Activated naive CD4-positive, alpha-beta T cell treated with anti-CD3 and anti-CD28 coated beads for 36 hours (primary cell): ENCODE measurements at regions of chr10 and their contacts with region 1.

Region 1: GRCh38 chr10:45672181-45673073 is at the start of gene ZFAND4:
- DNase-seq: peak; percentile 95
- H3K4me3 Mint-ChIP-seq: peak within 1 kb of the TSS; percentile 83
- H3K27ac Mint-ChIP-seq: peak within 1 kb of the TSS; percentile 73
- H3K4me1 Mint-ChIP-seq: peaks cover 31% of the 10 kb centered on the region
- H3K27me3 Mint-ChIP-seq: no peaks in the 10 kb centered on the region
- total RNA-seq, gene ZFAND4: 13.3 to 14.7 TPM

Region 2: GRCh38 chr10:44143556-44143955 is 1528.9 kb before region 1 on chr10:
- CTCF ChIA-PET with region 1: no interaction called
- intact Hi-C with region 1: no loop called
- DNase-seq: no peak
- H3K4me3 Mint-ChIP-seq: no peak overlapping the region
- H3K27ac Mint-ChIP-seq: no peak overlapping the region
- H3K4me1 Mint-ChIP-seq: no peaks in the 10 kb centered on the region
- H3K27me3 Mint-ChIP-seq: peaks cover 2% of the 10 kb centered on the region

Region 3: DNA sequence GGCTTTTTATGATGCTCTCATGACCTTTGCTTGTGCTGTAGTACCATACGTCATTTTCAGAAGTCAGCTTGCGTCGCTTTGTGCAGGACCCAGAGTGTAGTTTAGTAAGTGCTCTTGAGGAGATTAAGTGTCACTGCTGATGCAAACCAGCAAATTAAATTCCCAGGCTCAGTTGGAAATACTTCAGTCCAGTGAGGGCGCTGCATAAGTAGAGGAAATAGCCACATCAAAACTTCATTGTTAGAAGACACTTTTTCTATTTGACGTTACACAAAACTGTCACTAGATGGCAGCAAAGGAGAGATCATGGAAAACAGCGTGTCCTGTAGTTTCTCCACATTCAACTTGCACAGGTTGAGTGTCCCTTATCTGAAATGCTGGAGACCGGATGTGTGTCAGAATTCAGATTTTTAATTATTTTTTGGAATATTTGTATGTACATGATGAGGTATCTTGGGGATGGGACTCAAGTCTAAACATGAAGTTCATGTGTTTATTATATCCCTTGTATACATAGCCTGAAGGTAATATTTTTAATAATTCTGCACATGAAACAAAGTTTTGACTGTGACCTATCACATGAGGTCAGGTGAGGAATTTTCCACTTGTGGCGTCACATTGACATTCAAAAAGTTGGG is 663.8 kb before region 1 on chr10:
- CTCF ChIA-PET with region 1: no interaction called
- intact Hi-C with region 1: loop called (anchors 2 kb)
- DNase-seq: peak; percentile 33
- H3K4me3 Mint-ChIP-seq: no peak overlapping the region
- H3K27ac Mint-ChIP-seq: no peak overlapping the region
- H3K4me1 Mint-ChIP-seq: no peaks in the 10 kb centered on the region
- H3K27me3 Mint-ChIP-seq: no peaks in the 10 kb centered on the region

Region 4: DNA sequence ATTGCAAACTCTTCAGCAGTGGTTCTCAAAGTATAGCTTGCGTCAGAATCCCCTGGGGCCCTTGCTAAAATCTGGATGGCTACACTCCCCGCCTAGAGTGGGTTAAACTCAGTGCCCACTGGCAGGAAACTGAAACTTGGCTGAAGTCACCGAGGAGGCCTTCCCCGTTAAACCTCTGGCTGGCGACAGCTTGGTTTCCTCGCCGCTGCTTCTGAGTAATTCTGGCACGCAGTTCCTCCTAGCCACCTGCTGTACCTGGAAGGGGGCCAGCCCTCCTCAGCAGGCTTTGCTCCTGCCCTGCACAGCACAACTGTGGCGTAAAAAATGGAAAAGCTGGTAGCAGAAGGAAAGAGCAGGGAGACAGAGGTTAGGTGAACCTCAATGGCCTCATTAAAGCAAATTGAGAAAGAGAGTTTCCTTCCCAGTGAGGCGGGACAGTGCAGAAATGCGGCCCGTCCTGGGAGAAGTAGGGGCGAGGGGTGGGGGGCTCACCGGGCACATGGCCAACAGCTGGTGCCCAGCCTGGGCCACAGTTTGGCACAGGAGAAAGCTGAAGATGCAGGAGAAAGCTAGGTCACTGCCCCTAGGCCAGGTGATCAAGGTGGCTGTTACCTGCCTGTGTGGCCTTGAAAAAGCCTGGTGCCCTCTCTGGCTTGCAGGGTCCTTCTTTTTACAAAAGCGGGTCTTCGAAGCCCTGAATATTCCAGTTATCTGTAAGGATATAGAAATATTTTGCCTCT is 251.8 kb before region 1 on chr10:
- CTCF ChIA-PET with region 1: no interaction called
- intact Hi-C with region 1: loop called (anchors 5 kb)
- DNase-seq: peak; percentile 68
- H3K4me3 Mint-ChIP-seq: peak overlapping the region; percentile 86
- H3K27ac Mint-ChIP-seq: peak overlapping the region; percentile 4
- H3K4me1 Mint-ChIP-seq: peaks cover 36% of the 10 kb centered on the region
- H3K27me3 Mint-ChIP-seq: no peaks in the 10 kb centered on the region

Region 5: GRCh38 chr10:45456822-45457221 is 215.6 kb before region 1 on chr10:
- CTCF ChIA-PET with region 1: no interaction called
- intact Hi-C with region 1: no loop called
- DNase-seq: no peak
- H3K4me3 Mint-ChIP-seq: no peak overlapping the region
- H3K27ac Mint-ChIP-seq: no peak overlapping the region
- H3K4me1 Mint-ChIP-seq: no peaks in the 10 kb centered on the region
- H3K27me3 Mint-ChIP-seq: no peaks in the 10 kb centered on the region

Region 6: DNA sequence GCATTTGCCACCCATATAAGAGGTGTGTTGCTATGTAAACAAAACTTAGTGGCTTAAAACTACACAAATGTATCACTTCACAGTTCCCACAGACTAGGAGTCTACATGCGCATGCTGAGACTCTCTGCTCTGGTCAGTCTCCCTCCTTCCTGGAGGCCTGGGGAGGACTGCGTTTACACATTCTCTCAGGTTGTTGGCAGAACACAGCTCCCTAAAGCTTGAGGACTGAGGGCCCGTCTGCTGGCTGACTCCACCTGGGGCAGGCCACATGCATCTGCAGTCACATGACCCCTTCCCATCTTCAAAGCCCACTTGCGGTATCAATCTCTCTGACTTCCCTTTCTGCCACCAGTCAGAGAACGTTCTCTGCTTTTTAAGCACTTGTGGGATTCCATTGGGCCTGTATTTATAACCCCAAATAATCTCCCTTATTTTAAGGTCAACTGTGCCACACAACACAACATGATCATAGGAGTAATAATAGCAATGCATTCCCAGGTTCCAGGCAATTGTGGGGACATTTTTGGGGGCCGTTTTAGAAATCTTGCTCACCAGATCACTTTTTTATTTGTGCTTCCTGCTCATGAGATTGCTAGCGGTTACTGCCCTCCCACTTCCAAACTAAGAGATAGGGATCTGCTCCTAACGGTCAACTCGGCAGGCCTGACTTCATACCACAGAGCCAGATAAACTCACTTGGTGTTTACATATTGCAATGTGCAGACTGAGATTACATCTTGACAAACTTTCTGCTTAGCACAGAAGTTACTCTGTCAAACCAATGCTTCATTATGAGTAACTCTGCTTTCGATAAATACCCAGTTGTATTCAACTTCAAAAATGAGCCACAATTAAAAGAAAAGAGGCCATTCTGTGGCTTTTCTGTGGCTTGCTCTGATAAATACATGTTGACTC is 202.1 kb before region 1 on chr10:
- CTCF ChIA-PET with region 1: interaction called, 31 read pairs
- intact Hi-C with region 1: loop called (anchors 1 kb)
- DNase-seq: peak; percentile 77
- H3K4me3 Mint-ChIP-seq: peak overlapping the region; percentile 48
- H3K27ac Mint-ChIP-seq: peak overlapping the region; percentile 87
- H3K4me1 Mint-ChIP-seq: peaks cover 27% of the 10 kb centered on the region
- H3K27me3 Mint-ChIP-seq: no peaks in the 10 kb centered on the region

Region 7: DNA sequence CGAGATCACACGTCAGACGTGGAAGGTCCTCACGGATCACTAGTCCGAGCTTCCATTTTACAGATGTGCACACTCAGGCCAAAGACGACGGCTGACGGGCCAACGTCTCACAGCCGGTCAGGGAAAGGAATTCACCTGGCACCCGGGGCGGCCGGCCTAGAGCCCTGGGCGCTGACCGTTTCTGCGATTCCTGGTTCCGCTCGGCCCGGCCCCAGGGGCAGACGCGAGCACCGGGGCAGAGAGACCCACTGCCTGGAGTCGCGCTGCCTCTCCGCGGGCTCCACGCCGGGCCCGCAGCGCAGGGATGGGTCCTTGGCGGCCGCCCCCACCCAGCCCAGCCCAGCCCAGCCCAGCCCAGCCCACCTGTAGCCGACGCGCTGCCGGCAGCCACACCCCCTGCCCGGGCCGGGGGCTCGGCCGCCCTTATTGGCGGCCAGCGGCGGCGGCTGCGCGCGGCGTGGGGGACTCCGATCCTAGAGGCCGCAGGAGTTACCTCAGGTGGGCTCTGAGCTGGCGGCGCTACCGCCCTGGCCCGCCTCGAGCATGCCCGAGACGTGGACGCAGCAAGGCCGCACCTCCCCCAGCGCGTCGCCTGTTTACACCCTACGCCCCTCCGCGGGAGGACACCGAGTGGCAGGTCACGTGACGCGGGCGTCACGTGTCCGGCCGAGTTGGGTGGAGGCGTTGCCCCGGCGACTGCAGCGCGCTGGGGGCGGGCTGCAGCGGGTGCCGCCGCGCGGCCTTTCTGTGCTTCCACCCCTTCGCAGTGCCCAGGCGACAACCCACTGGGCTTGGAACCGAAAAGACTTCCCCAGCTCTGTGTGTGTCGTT is 77.9 kb before region 1 on chr10:
- CTCF ChIA-PET with region 1: no interaction called
- intact Hi-C with region 1: loop called (anchors 1 kb)
- DNase-seq: peak; percentile 87
- H3K4me3 Mint-ChIP-seq: peak overlapping the region; percentile 77
- H3K27ac Mint-ChIP-seq: peak overlapping the region; percentile 37
- H3K4me1 Mint-ChIP-seq: peaks cover 29% of the 10 kb centered on the region
- H3K27me3 Mint-ChIP-seq: no peaks in the 10 kb centered on the region

Region 8: DNA sequence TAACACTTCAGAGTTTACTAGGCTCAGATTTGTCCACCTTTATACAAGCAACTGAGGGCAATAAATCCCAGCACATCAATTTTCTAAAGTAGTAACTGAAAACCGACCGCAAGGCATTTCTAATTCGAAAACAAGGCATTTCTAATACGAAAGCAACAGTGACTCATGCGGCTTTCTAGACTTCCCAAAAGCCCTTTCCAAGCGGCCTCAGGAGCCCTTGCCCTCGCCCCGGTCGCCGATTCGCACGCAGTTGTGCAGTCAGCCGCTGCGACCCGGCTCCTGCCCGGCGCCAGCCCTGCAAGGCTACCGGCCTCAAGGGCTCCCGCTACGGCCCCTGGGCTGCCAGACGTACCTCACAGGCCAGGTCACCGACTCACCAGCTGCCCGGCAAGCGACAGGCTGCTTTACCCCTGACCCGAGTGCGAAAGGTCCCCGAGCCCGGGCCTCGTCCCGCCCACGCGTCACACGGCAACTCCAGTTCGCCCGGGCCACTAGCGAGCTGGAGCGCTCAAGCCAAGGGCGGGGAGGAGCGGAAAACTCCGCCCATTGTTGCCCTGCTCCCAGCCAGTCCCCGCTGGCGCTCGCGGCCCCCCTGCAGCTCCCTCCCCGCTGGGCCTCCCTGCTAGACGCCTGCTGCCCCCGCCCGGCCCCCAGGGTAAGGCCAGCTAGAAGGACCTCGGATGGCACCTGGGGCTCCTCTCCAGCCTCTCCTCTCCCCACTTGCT is 350.7 kb after region 1 on chr10:
- CTCF ChIA-PET with region 1: interaction called, 3 read pairs
- intact Hi-C with region 1: loop called (anchors 10 kb)
- DNase-seq: peak; percentile 87
- H3K4me3 Mint-ChIP-seq: peak overlapping the region; percentile 77
- H3K27ac Mint-ChIP-seq: peak overlapping the region; percentile 73
- H3K4me1 Mint-ChIP-seq: peaks cover 90% of the 10 kb centered on the region
- H3K27me3 Mint-ChIP-seq: no peaks in the 10 kb centered on the region